Activated naive CD4-positive, alpha-beta T cell treated with anti-CD3 and anti-CD28 coated beads, Interleukin-2, amount 10 ng/mL, durations not matched to agents 7 days and 5 days (primary cell): ENCODE measurements at regions of chr1 and their contacts with region 1.

Region 1: DNA sequence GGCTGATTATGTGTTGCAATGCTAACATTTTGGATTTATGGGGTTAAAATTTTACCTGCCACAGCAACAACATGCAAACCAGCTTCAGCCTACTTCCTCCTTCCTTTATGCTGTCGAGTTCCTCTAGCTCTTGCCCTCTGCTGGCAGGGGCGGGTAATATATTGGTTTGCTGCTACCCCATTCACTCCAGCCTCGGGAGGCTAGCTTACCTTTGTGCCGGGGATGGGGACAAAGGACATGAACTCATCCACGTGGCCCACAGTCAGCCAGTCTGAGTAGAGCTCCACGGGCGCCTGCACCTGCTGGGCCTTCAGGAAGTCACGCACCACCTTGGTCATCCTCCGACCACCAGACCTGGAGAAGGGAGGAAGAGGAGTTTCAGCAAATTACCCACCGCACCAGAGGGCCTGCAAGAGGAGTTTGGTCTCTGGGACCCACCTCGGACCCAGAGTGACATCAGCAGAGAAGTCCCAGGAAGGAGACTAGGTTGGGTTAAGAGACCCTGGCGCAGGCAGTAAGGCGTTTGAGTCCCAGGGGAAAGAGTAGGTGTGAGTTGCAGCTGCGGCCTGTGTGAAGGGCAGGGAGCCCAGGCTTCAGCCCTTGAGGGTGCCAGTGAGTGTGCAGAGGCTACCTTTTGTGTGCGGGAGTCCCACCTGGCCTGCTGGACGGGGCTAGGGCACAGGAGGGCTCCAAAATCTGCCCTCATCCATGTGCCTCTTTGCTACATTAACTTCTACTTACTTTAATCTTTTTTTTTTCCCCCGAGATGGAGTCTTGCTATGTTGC is 21.8 kb upstream of the SDHB start:
- DNase-seq: peak; percentile 59
- H3K4me3 Mint-ChIP-seq: no peak overlapping the region
- H3K27ac Mint-ChIP-seq: no peak overlapping the region
- H3K4me1 Mint-ChIP-seq: peaks cover 2% of the 10 kb centered on the region
- H3K27me3 Mint-ChIP-seq: peaks cover 3% of the 10 kb centered on the region

Region 2: DNA sequence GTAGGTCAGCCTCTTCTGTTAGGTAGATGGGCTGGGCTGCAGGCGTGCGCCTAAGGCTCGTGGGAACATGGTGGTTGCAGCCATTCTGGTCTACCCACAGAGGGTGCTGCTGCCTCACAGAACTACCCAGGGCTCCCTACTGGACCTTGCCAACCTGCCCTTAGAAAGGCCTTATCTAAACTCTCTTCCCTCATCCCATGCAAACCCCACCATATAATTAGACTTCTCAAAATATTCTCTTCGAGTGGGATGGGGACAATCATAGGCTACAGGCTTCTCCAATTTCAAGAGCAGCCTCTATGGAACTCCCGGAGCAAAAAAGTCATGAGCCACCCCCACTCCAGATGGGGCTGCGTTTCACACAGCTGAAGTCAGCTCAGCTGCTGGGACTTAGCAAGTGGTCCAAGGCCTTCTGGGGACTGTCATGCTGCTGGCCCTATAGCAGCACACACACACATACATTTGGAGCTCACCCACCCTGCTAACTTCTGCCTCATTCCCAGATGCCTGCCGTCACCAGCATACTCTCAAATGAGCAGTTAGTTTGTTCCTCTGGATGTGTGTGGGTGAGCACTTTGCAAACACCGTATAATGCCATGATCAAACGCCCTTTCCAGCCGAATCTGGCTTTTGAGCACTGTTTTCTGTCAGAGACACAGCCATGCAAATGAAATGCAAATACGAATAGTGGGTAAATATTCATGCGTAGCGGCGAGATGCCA is 15.8 kb before region 1 on chr1:
- CTCF ChIA-PET with region 1: interaction called, 33 read pairs
- DNase-seq: peak; percentile 61
- H3K4me3 Mint-ChIP-seq: no peak overlapping the region
- H3K27ac Mint-ChIP-seq: no peak overlapping the region
- H3K4me1 Mint-ChIP-seq: peaks cover 7% of the 10 kb centered on the region
- H3K27me3 Mint-ChIP-seq: peaks cover 36% of the 10 kb centered on the region